AG04449 (cell line): ENCODE measurements at regions of chr1 and their contacts with region 1.

Region 1: GRCh38 chr1:147389532-147390524 is 147.3 kb downstream of the CHD1L start:
- DNase-seq: no peak
- H3K4me3 ChIP-seq: no peak overlapping the region
- CTCF ChIP-seq: peak; percentile 71

Region 2: DNA sequence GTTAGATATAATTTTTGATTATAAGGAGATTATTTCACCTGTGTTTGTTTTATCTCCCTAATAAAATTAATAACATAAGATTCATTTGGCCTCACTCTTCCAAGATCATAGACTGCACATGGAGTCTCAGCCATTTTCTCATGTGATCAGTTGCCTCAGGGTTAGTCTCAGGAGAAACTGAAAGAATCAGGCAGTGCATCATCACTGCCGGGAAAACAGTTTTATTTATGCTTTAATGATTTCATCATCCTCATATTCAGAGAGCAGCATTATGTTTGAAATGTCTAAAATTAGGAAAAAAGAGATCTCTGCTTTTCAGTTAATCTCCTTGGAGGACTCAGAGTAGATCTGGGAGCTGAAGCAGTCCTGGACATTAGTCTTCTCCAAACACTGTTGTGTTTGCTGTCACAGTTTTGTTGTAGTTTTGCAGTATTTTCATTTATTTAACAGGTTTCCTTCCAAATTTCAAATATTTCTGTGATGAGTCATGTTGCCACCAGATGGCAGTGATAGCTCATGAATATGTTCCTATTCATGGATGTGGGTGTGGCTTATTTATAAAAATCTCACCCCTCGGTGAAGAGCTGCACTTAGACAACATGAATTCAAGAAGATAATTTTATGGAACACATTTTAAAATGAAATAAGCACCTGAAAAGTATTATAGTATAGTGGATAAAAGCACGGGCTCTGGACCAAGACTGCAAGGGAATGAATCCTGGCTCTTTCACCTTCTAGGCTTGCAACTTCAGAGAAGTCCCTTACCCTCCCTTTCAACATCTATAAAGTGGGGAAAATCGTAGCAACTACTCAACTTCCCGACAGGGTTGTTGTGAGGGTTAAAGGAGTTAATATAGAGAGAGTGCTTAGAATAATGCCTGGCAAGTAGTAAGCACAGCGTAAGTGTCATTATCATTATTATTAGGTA is 116.2 kb before region 1 on chr1:
- CTCF ChIA-PET with region 1: interaction called, 146 read pairs
- POLR2A ChIA-PET with region 1: interaction called, 3 read pairs
- DNase-seq: peak; percentile 42
- H3K4me3 ChIP-seq: no peak overlapping the region; the same call in 1 of the 2 replicates
- CTCF ChIP-seq: peak; percentile 26

Region 3: DNA sequence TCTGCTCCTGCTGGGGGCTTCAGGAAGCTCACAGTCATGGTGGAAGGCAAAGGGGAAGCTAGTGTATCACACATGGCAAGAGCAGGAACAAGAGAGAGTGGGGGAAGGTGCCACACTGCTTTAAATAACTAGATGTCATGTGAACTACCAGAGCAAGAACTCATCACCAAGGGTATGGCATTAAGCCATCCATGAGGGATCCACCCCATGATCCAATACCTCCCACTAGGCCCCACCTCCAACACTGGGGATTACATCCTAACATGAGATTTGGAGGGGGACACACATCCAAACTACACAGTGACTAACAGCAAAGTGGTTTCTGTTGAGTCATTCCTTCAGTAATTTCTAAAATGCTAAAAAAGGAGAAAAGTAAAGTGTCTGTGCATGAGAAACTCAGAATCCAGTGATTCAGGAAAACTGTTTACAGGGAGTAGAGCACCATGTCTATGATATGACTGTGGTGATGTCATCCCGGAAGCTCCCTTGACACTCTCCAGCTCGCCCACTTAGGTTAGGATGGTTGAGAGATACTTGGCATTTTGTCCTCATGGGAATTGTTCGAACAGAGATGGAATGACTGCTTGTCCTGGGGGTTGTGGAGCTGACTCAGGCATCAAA is 97.1 kb before region 1 on chr1:
- CTCF ChIA-PET with region 1: interaction called, 12 read pairs
- POLR2A ChIA-PET with region 1: no interaction called
- DNase-seq: peak; percentile 96
- H3K4me3 ChIP-seq: peak overlapping the region; percentile 13
- CTCF ChIP-seq: no peak

Region 4: GRCh38 chr1:147377263-147378246 is 12.3 kb before region 1 on chr1:
- CTCF ChIA-PET with region 1: interaction called, 10 read pairs
- POLR2A ChIA-PET with region 1: no interaction called
- DNase-seq: no peak
- H3K4me3 ChIP-seq: no peak overlapping the region
- CTCF ChIP-seq: no peak